Activated CD4-positive, alpha-beta T cell treated with anti-CD3 and anti-CD28 coated beads for 36 hours (primary cell): ENCODE measurements at regions of chr11 and their contacts with region 1.

Region 1: DNA sequence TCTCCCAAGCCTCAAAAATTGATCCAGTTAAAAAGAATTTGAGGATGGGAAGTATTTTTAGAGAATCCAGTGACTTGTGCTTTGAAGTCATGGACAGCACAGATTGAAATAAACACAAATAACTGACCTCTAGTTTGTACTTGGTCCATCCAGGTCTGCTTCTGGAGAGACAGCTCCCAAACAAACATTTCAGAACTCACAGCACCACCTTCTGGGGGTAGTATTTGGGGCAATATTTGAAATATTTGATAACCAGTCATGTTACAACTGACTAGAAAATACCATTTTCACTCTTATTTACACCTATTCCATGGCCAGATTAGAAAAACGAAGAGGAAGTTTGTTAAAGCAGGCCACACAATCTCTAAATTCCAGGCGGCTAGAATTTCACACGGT is 56.2 kb downstream of the CTSC start:
- DNase-seq: no peak
- ATAC-seq: no peak
- H3K4me3 Mint-ChIP-seq: no peak overlapping the region
- H3K27ac Mint-ChIP-seq: no peak overlapping the region
- H3K4me1 Mint-ChIP-seq: no peaks in the 10 kb centered on the region
- H3K27me3 Mint-ChIP-seq: no peaks in the 10 kb centered on the region

Region 2: DNA sequence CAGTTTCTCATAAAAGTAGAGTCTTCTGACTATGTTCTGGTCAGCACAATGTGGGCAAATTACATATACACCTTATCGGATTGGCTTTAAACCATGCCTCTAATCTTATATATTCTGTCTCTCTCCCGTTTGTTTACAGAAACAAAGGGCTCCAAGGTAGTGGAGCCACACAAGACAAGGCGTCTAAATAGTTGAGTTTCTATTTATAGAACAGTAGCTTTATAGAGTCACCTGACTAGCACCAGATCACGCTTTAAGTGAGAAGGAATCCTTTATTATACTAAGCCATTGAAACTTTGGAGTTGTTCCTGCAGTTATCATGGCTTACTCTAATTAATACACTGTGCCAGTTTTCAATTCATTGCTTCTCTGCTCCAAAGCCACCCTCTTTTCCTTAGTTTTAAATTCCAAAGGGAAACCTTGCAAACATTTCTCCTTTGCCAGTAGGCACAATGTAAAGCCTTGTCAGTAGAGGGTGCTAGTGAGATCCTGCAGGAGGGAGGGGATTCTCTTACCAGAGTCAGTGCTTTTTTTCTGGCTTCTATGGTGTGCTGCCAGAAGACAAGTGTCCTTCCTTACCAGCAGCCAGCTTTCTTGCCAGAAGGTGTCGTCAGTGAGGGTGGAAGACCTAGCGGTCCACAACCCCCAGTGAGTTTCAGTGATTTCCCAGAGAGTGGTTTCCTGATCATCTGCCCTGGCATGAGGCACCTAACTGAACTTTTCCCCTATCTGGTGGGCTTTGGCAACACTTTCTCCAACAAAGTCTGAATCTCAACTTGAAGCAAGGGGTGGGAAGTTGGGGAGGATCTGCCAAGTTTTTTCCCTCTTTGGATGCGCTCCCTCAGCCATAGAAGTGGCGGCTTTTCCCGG is 177.7 kb before region 1 on chr11:
- CTCF ChIA-PET with region 1: no interaction called
- POLR2A ChIA-PET with region 1: no interaction called
- intact Hi-C with region 1: loop called in 1 of 2 experiments (anchors 5 kb)
- DNase-seq: peak; percentile 51
- ATAC-seq: peak; percentile 81
- H3K4me3 Mint-ChIP-seq: no peak overlapping the region
- H3K27ac Mint-ChIP-seq: no peak overlapping the region
- H3K4me1 Mint-ChIP-seq: no peaks in the 10 kb centered on the region
- H3K27me3 Mint-ChIP-seq: peaks cover 2% of the 10 kb centered on the region

Region 3: GRCh38 chr11:88384673-88385005 is 103.3 kb after region 1 on chr11:
- CTCF ChIA-PET with region 1: no interaction called
- POLR2A ChIA-PET with region 1: no interaction called
- intact Hi-C with region 1: no loop called
- DNase-seq: no peak
- ATAC-seq: peak; percentile 58
- H3K4me3 Mint-ChIP-seq: no peak overlapping the region
- H3K27ac Mint-ChIP-seq: no peak overlapping the region
- H3K4me1 Mint-ChIP-seq: peaks cover 9% of the 10 kb centered on the region
- H3K27me3 Mint-ChIP-seq: no peaks in the 10 kb centered on the region

Region 4: GRCh38 chr11:88535916-88536547 is 254.7 kb after region 1 on chr11:
- CTCF ChIA-PET with region 1: no interaction called
- POLR2A ChIA-PET with region 1: no interaction called
- intact Hi-C with region 1: no loop called
- DNase-seq: no peak
- ATAC-seq: peak; percentile 100
- H3K4me3 Mint-ChIP-seq: no peak overlapping the region
- H3K27ac Mint-ChIP-seq: peak overlapping the region; percentile 42
- H3K4me1 Mint-ChIP-seq: peaks cover 21% of the 10 kb centered on the region
- H3K27me3 Mint-ChIP-seq: peaks cover 10% of the 10 kb centered on the region